WTC11 (cell line): ENCODE measurements at regions of chr5 and their contacts with region 1.

Region 1: DNA sequence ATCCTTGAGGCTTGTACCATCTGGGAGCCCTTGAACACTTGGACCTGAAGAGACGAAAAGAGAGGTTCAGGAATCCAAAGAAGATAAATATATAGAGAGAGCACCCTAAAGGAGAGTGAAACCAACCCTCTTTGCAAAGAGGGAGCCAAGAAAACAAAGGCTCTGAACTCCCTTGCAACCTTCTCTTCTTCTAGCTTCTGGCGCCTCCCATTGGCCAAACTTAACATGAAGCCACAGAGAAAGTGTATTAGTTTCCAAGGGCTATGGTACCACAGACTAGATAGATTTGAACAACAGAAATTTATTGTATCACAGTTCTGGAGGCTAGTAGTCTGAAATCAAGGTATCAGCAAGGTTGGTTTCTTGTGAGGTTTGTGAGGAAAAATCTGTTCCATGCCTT is 175.1 kb downstream of the HCN1 start:
- DNase-seq: peak; percentile 72
- ATAC-seq: peak; percentile 98
- H3K4me3 Mint-ChIP-seq: no peak overlapping the region
- H3K27ac Mint-ChIP-seq: no peak overlapping the region
- H3K4me1 Mint-ChIP-seq: 0 out of 2 replicates have a peak, but pooled peaks cover 2% of the 10 kb centered on the region
- H3K27me3 Mint-ChIP-seq: no peaks in the 10 kb centered on the region
- CTCF ChIP-seq: peak; percentile 47; the same call in 1 of the 2 replicates

Region 2: DNA sequence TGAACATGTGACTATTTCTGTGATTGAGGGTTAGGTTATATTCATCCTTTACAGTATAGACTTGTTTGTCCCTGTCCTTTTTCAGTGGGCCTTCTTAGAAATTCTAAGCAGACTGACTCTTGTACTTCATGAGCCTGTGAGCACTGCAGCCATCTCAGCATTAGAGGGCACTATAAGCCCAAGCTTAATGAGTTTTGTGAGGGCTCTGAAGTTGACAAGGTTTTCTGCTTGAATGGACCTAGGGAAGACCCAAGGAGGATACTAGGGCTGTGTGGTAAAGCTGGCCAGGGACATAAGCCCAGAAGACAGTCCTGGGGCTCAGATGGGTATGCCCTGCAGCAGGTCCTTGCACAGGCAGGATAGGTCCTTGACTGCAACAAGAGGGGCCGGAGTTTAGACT is 585.8 kb before region 1 on chr5:
- CTCF ChIA-PET with region 1: interaction called, 15 read pairs
- POLR2A ChIA-PET with region 1: no interaction called
- DNase-seq: peak; percentile 60
- ATAC-seq: peak; percentile 100
- H3K4me3 Mint-ChIP-seq: no peak overlapping the region
- H3K27ac Mint-ChIP-seq: no peak overlapping the region
- H3K4me1 Mint-ChIP-seq: no peaks in the 10 kb centered on the region
- H3K27me3 Mint-ChIP-seq: no peaks in the 10 kb centered on the region
- CTCF ChIP-seq: peak; percentile 16; the same call in 1 of the 2 replicates

Region 3: DNA sequence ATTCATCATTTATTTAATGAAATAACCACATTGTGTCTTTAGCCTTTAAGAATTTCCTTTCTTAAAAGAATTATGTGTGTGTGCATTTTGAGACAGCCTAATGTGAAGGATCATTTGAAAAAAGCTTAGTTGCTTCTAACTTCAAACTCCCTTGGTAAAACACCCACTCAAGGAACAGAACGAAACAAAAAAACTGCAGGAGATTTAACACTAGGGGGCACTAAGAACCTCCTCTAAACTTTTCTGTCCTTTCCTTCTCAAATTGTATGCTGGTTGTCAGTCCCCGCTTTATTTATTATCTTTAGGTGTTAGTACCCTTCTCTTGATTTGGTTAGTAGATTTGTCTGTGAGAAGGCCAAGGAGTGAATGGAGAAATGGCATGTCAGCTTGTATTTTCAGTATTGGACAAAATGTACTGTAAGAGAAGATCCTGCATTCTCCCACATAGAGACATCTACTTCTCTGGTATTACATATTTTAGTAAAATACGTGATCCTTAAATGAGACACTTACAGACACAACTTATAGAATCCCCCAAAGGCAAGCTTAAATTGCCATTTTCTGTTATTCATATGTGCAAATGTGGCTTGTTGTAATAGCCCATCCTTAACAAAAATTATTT is 482.6 kb before region 1 on chr5:
- CTCF ChIA-PET with region 1: interaction called, 12 read pairs
- POLR2A ChIA-PET with region 1: no interaction called
- DNase-seq: no peak
- ATAC-seq: peak; percentile 81
- H3K4me3 Mint-ChIP-seq: no peak overlapping the region
- H3K27ac Mint-ChIP-seq: no peak overlapping the region
- H3K4me1 Mint-ChIP-seq: peaks cover 10% of the 10 kb centered on the region
- H3K27me3 Mint-ChIP-seq: no peaks in the 10 kb centered on the region
- CTCF ChIP-seq: peak; percentile 61

Region 4: GRCh38 chr5:45399041-45399440 is 122.0 kb before region 1 on chr5:
- CTCF ChIA-PET with region 1: no interaction called
- POLR2A ChIA-PET with region 1: no interaction called
- DNase-seq: no peak
- ATAC-seq: peak; percentile 61
- H3K4me3 Mint-ChIP-seq: no peak overlapping the region
- H3K27ac Mint-ChIP-seq: no peak overlapping the region
- H3K4me1 Mint-ChIP-seq: peaks cover 10% of the 10 kb centered on the region
- H3K27me3 Mint-ChIP-seq: no peaks in the 10 kb centered on the region
- CTCF ChIP-seq: no peak

Region 5: GRCh38 chr5:45491368-45491767 is 29.7 kb before region 1 on chr5:
- CTCF ChIA-PET with region 1: no interaction called
- POLR2A ChIA-PET with region 1: no interaction called
- DNase-seq: no peak
- ATAC-seq: no peak
- H3K4me3 Mint-ChIP-seq: no peak overlapping the region
- H3K27ac Mint-ChIP-seq: no peak overlapping the region
- H3K4me1 Mint-ChIP-seq: no peaks in the 10 kb centered on the region
- H3K27me3 Mint-ChIP-seq: no peaks in the 10 kb centered on the region
- CTCF ChIP-seq: no peak

Region 6: DNA sequence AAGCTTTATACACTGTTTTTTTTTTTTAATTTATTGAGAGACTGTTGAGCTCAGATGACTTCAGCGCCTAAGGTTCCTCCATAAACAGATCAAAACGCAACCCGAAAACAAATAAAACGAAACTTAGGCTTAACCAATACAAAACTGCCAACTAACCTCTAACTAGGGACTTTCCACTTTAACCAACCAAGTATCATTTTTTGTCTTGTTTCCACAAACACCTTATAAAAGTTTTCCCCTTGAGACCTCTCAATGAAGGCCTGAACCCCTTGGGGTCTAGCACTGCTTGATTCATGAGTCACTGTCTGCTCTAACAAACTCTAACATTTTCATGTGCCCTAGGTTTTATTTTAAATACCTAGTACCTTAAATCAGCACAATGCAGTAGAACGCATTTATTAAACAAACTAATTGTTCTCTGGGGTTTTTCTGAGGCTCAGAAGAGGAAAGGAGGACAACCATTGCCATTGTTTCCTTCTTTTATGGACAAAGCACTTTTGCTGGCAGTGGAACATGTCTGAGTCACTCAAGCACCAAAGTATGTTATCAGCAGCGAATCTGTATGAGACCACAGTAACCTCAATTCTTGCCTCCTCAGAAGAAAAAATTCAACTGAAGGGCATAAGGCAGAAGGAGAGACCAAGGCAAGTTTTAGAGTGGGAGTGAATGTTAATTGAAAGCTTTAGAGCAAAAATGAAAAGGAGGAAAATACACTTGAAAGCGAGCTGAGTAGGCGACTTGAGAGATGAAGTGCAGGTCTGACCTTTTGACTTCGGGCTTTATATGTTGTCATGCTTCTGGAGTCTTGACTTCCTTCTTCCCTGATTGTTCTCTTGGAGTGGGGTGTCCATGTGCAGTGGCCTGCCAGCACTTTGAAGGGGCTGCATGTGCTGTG is 272.8 kb after region 1 on chr5:
- CTCF ChIA-PET with region 1: no interaction called
- POLR2A ChIA-PET with region 1: no interaction called
- DNase-seq: no peak
- ATAC-seq: no peak
- H3K4me3 Mint-ChIP-seq: no peak overlapping the region
- H3K27ac Mint-ChIP-seq: no peak overlapping the region
- H3K4me1 Mint-ChIP-seq: no peaks in the 10 kb centered on the region
- H3K27me3 Mint-ChIP-seq: peaks cover 6% of the 10 kb centered on the region
- CTCF ChIP-seq: no peak